ENCODE measurements at regions of chr12 and their contacts with region 1.

Region 1: DNA sequence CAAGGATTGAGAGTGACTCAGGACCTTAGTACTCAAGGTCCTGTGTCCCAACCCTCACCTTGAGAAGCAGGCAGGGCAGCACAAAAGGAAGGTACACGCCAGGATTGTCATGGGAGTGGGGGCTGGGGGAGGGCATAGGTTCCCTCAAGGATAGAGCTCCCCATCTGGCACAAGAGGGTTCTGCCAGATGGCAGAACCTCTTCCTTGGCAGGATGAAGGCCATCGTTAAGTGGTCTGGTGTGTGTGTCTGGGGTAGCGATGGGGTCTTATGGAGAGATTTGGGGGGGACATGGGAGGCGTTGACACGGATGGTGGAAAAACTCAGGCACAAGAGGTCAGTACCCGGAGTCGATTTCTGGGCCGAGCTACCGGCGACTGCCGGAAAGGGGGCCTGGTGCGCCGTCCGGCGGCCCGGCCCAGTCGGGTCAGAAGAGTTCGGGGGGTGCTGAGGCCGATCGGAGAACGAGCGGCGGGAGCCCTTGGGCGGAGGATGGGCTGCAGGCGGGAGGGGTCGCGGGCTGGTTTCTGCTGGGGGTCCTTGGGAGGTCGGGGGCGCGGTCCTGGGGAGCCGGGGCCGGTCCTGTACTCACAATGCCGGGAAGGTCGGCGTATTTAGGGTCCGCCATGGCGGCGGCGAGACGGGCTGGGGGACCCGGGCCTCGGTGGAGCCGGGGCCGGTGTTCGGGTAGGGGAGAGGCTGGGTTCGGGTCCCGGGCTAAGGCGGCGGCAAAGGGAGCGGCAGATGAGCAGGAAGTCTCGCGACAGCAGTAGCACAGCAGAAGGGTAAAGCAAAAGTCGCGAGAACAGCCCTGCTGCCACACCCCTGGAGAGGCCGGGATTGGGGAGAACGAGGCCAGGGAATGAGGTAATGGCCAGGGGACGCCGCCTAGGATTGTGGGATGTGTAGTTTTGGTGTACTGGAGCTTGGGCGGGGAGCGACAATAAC is at the start of gene DCTN2:
- DNase-seq: peak; percentile 97
- H3K4me3 Mint-ChIP-seq: peak within 1 kb of the TSS; percentile 99
- H3K27ac Mint-ChIP-seq: peak within 1 kb of the TSS; percentile 91
- H3K4me1 Mint-ChIP-seq: peaks cover 60% of the 10 kb centered on the region
- H3K27me3 Mint-ChIP-seq: peaks cover 20% of the 10 kb centered on the region
- total RNA-seq, gene DCTN2: 80.9 to 85.1 TPM

Region 2: DNA sequence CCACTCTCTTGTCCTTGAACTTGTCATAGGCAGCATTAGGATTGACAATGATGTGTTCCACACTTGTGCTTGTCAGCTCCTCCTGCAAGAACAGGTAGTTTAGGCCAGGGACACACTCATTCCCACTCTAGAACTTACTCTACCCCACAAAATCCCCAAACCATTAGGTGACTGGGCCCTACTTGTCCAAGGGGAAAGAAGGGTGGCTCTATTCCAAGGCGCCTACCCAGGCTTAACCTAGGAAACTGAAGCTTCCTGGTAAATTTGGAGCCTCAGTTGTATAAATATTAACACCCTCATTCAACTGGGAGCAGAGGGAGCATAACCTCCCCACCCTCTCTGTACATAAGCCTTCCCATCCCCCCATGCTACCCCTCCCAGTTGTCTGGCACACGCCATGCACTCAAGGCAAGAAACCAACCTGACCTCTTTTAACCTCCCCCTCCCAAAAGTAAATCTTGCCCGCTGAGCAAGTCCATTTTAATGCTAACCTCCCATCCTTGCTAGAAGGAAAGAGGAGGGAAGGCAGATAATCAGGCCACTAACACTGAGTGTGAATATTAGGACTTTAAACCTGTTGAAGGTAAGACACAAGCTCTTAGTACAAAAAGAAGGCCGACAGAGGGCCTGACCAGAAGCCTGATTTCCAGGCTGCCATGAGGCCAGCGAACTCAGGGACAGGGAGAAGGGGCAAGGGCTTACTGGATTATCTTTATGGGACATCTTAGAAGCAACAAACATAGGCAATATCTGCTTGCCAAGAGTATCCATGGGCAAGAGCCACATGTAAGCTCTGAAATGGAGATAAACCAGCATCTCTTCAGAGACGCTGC is 10.7 kb before region 1 on chr12:
- CTCF ChIA-PET with region 1: interaction called, 16 read pairs
- POLR2A ChIA-PET with region 1: interaction called, 9 read pairs
- DNase-seq: no peak
- H3K4me3 Mint-ChIP-seq: no peak overlapping the region
- H3K27ac Mint-ChIP-seq: no peak overlapping the region
- H3K4me1 Mint-ChIP-seq: no peaks in the 10 kb centered on the region
- H3K27me3 Mint-ChIP-seq: no peaks in the 10 kb centered on the region

Region 3: GRCh38 chr12:57633478-57633840 is 86.7 kb after region 1 on chr12:
- CTCF ChIA-PET with region 1: no interaction called
- POLR2A ChIA-PET with region 1: no interaction called
- DNase-seq: no peak
- H3K4me3 Mint-ChIP-seq: peak overlapping the region; percentile 61
- H3K27ac Mint-ChIP-seq: no peak overlapping the region
- H3K4me1 Mint-ChIP-seq: peaks cover 13% of the 10 kb centered on the region
- H3K27me3 Mint-ChIP-seq: peaks cover 54% of the 10 kb centered on the region